Ascending aorta (tissue), 2 donors: ENCODE measurements at regions of chr6 and their contacts with region 1.

Region 1: DNA sequence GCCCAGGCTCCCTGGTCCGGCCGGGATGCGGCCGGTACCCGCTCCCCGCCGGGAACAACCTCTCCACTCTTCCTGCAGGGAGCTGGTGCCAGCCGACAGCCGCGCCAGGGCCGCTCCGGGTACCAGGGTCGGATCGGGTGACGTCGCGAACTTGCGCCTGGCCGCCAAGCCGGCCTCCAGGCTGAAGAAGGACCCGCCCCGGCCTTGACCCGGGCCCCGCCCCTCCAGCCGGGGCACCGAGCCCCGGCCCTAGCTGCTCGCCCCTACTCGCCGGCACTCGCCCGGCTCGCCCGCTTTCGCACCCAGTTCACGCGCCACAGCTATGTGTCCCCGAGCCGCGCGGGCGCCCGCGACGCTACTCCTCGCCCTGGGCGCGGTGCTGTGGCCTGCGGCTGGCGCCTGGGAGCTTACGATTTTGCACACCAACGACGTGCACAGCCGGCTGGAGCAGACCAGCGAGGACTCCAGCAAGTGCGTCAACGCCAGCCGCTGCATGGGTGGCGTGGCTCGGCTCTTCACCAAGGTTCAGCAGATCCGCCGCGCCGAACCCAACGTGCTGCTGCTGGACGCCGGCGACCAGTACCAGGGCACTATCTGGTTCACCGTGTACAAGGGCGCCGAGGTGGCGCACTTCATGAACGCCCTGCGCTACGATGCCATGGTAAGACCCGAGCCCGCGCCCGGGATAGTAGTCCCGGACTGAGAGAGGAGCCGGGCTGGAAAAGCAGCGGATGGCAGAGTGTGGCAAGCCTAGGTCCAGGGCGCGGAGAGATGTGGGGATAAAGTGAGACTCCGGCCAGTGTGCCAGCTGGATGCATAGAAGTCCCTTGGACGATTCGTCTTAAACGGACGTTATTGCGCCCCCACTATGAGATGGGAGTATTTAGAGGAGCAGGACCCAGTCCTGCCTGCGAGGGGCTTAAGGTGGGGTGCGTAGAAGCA is at the start of gene NT5E:
- DNase-seq: peak; percentile 47 to 94
- H3K4me3 ChIP-seq: peak within 1 kb of the TSS; percentile 75 to 88
- H3K27ac ChIP-seq: peak within 1 kb of the TSS; percentile 93 to 97
- H3K4me1 ChIP-seq: peaks cover 0 to 9% of the 10 kb centered on the region in 2 donors
- H3K27me3 ChIP-seq: no peaks in the 10 kb centered on the region
- CTCF ChIP-seq: peak in 1 of 3 experiments; percentile 4
- total RNA-seq, gene NT5E: 143 TPM

Region 2: GRCh38 chr6:84581494-84582259 is 868.4 kb before region 1 on chr6:
- intact Hi-C with region 1: no loop called
- DNase-seq: no peak
- H3K4me3 ChIP-seq: no peak overlapping the region
- H3K27ac ChIP-seq: no peak overlapping the region
- H3K4me1 ChIP-seq: no peaks in the 10 kb centered on the region
- H3K27me3 ChIP-seq: no peaks in the 10 kb centered on the region
- CTCF ChIP-seq: no peak

Region 3: DNA sequence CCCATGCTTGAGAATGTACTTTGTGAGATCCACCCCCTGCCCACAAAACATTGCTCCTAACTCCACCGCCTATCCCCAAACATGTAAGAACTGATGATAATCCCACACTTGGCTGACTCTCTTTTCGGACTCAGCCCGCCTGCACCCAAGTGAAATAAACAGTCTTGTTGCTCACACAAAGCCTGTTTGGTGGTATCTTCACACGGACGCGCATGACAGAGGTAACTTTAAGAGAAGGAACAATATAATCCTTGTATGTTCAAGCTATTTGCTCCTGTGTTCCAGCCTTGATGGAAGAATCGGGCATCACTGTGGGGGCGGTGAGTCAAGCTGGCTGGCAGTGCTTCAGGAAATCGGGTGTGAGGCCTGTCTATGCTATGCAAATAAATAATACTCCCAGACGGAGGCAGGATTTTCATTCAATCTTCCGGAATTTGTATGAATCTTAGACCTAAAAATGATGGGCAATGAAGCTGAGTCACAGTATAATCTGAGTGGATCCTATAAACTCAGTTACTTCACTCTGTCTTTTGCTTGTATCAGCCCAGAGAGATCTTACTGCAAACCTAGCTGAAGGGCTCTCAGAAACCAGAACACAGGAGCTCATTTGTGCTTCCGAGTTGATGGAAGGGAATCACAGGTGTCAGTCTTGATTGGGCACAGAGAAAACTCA is 45.5 kb before region 1 on chr6:
- intact Hi-C with region 1: loop called (anchors 5 kb)
- DNase-seq: peak in 1 of 2 donors; percentile 73
- H3K4me3 ChIP-seq: no peak overlapping the region
- H3K27ac ChIP-seq: peak overlapping the region; percentile 80 to 81
- H3K4me1 ChIP-seq: peaks cover 7 to 28% of the 10 kb centered on the region in 2 donors
- H3K27me3 ChIP-seq: no peaks in the 10 kb centered on the region
- CTCF ChIP-seq: no peak

Region 4: DNA sequence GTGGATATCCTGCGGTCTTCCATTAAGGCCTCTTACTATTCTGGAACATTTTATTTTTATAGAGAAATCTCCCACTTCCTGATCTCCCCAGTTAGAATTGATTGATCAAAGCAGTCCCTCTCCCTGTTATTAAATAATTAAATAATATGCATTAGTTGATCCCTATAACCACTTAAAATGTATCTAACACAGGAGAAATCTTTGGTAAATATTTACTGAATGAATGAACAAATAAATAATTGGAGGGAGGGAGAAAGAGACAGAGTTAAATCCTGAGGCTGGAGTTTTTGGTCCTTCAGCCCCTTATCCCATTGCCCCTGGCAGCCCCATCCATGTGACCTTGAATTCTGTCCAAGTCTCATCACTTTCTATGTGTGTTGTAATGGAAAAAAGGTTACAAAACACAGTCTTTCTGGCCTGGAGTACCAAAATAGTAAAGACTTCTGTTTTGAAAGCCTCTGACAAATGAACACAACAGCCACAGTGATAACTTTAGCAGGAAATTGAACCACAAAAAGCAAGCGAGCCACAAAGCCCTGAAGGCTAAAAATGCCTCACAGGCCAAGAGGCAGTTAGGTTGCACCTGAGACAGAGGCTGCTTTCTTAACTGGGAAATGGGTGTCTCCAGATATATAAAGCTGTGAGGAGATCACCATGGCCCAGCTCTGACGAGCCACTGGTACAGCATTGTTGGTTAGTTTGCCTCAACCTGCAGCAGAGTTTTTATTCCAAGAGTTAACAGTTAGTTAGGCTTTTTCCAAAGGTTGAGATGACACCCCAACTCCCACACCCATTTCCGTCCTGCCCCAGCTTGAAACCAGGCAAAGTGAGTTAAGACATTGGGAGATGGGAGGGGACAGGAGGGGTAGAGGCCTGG is 11.1 kb after region 1 on chr6:
- intact Hi-C with region 1: loop called (anchors 1 kb)
- DNase-seq: no peak
- H3K4me3 ChIP-seq: no peak overlapping the region
- H3K27ac ChIP-seq: peak overlapping the region; percentile 90 to 93
- H3K4me1 ChIP-seq: peaks cover 19 to 82% of the 10 kb centered on the region in 2 donors
- H3K27me3 ChIP-seq: no peaks in the 10 kb centered on the region
- CTCF ChIP-seq: no peak

Region 5: GRCh38 chr6:85482905-85483700 is 33.0 kb after region 1 on chr6:
- intact Hi-C with region 1: loop called (anchors 1 kb)
- DNase-seq: peak; percentile 54 to 92
- H3K4me3 ChIP-seq: peak overlapping the region in 1 of 2 donors; percentile 8
- H3K27ac ChIP-seq: peak overlapping the region; percentile 23 to 65
- H3K4me1 ChIP-seq: peaks cover 0 to 2% of the 10 kb centered on the region in 2 donors
- H3K27me3 ChIP-seq: no peaks in the 10 kb centered on the region
- CTCF ChIP-seq: peak; percentile 91 to 100 (median 99)

Region 6: GRCh38 chr6:85498596-85499258 is 48.6 kb after region 1 on chr6:
- intact Hi-C with region 1: no loop called
- DNase-seq: no peak
- H3K4me3 ChIP-seq: no peak overlapping the region
- H3K27ac ChIP-seq: no peak overlapping the region
- H3K4me1 ChIP-seq: no peaks in the 10 kb centered on the region
- H3K27me3 ChIP-seq: no peaks in the 10 kb centered on the region
- CTCF ChIP-seq: no peak

Region 7: DNA sequence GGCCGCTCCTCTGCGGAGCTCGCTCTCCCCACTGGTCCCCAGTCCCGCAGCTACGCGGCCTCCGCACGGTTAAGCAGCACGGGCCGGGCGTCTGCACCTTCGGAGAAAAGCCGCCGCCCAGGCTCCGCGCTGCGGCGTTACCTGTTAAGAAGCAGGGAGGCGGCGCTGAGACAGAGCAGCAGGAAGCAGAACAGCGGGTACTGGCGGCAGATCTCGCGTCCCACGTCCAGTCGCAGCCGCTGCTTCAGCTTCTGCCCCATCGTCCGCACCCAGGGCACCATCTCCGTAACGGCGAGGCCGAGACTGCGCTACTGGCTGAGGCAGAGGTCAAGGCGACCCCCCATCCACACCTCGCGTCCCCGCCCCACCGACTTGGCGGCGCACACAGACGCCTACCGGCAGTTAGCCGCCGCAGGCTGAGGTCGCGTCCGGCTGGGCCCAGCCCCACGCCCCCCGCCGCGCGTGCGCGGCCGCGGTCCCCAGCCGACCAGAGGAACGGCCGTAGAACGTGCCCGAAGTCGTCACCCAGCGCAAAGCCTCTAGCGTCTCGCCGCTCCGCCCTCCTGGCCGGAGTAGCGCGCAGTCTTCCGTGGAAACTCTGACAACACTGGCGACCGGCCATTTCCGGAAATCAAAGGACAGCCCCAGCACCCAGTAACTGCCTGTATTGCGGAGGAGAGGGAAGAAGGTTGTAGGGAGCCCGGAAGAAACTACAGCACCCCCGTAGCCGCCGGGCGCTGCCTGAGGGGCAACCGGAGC is 143.5 kb after region 1 on chr6 and contains the start of gene SNX14:
- intact Hi-C with region 1: loop called (anchors 5 kb)
- DNase-seq: peak; percentile 78 to 97
- H3K4me3 ChIP-seq: peak within 1 kb of the TSS; percentile 66 to 87
- H3K27ac ChIP-seq: peak within 1 kb of the TSS; percentile 95 to 96
- H3K4me1 ChIP-seq: peaks cover 0 to 15% of the 10 kb centered on the region in 2 donors
- H3K27me3 ChIP-seq: no peaks in the 10 kb centered on the region
- CTCF ChIP-seq: peak in 1 of 3 experiments; percentile 25
- total RNA-seq, gene SNX14: 63.2 TPM